Body of pancreas (tissue), 4 donors: ENCODE measurements at regions of chr5 and their contacts with region 1.

Region 1: GRCh38 chr5:166957782-166958181 is 1333.7 kb upstream of the WWC1 start:
- DNase-seq: no peak
- ATAC-seq: peak; percentile 42
- H3K4me3 ChIP-seq: no peak overlapping the region
- H3K27ac ChIP-seq: no peak overlapping the region
- H3K4me1 ChIP-seq: peaks cover 10% of the 10 kb centered on the region
- H3K27me3 ChIP-seq: no peaks in the 10 kb centered on the region
- CTCF ChIP-seq: no peak
- POLR2A ChIP-seq: no peak

Region 2: GRCh38 chr5:167057665-167058064 is 99.9 kb after region 1 on chr5:
- intact Hi-C with region 1: loop called (anchors 5 kb)
- DNase-seq: peak in 1 of 4 donors; percentile 9
- ATAC-seq: no peak
- H3K4me3 ChIP-seq: no peak overlapping the region
- H3K27ac ChIP-seq: no peak overlapping the region
- H3K4me1 ChIP-seq: no peaks in the 10 kb centered on the region
- H3K27me3 ChIP-seq: no peaks in the 10 kb centered on the region
- CTCF ChIP-seq: no peak
- POLR2A ChIP-seq: no peak

Region 3: GRCh38 chr5:167128581-167128980 is 170.8 kb after region 1 on chr5:
- intact Hi-C with region 1: no loop called
- DNase-seq: no peak
- ATAC-seq: no peak
- H3K4me3 ChIP-seq: no peak overlapping the region
- H3K27ac ChIP-seq: no peak overlapping the region
- H3K4me1 ChIP-seq: no peaks in the 10 kb centered on the region
- H3K27me3 ChIP-seq: no peaks in the 10 kb centered on the region
- CTCF ChIP-seq: no peak
- POLR2A ChIP-seq: no peak

Region 4: GRCh38 chr5:167232675-167233311 is 275.0 kb after region 1 on chr5:
- intact Hi-C with region 1: no loop called
- DNase-seq: no peak
- ATAC-seq: no peak
- H3K4me3 ChIP-seq: no peak overlapping the region
- H3K27ac ChIP-seq: no peak overlapping the region
- H3K4me1 ChIP-seq: no peaks in the 10 kb centered on the region
- H3K27me3 ChIP-seq: no peaks in the 10 kb centered on the region
- CTCF ChIP-seq: no peak
- POLR2A ChIP-seq: no peak